Panc1 (cell line): ENCODE measurements at regions of chr16 and their contacts with region 1.

Region 1: GRCh38 chr16:19330841-19331397 is 45.4 kb downstream of the CLEC19A start:
- DNase-seq: no peak
- ATAC-seq: peak; percentile 70
- H3K4me3 ChIP-seq: no peak overlapping the region
- H3K27ac ChIP-seq: no peak overlapping the region
- H3K4me1 ChIP-seq: no peaks in the 10 kb centered on the region
- H3K27me3 ChIP-seq: peaks cover 7% of the 10 kb centered on the region; the same call in 1 of the 2 replicates
- CTCF ChIP-seq: no peak

Region 2: DNA sequence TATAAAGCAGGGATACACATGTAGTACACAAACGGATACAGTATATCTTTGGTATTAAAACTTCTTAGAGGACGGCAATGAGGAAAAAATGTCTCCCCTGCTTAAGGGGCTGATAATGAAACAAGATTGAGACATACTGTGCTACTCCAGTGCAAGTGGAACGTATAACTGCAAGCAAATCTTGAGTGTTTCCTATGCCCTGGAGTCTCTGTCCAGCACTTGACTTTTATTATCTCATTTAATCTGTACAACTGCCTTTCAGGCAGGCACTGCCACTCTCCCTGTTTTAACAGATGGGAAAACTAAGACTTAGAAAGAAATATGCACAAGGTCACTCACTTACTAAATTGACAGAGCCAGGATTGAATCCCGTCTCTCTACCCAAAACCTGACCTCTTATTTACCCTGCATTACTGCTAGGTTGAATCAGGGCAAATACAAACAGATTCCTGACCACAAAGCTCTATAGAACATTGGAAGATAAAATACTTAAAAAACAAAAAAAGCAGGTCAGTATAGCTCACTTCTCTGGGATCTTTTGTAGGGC is 115.5 kb after region 1 on chr16:
- CTCF ChIA-PET with region 1: no interaction called
- POLR2A ChIA-PET with region 1: interaction called, 17 read pairs
- in situ Hi-C with region 1: no loop called
- intact Hi-C with region 1: no loop called
- DNase-seq: no peak
- ATAC-seq: no peak
- H3K4me3 ChIP-seq: no peak overlapping the region
- H3K27ac ChIP-seq: no peak overlapping the region
- H3K4me1 ChIP-seq: no peaks in the 10 kb centered on the region
- H3K27me3 ChIP-seq: no peaks in the 10 kb centered on the region
- CTCF ChIP-seq: no peak